ENCODE measurements at regions of chr6 and their contacts with region 1.

Region 1: DNA sequence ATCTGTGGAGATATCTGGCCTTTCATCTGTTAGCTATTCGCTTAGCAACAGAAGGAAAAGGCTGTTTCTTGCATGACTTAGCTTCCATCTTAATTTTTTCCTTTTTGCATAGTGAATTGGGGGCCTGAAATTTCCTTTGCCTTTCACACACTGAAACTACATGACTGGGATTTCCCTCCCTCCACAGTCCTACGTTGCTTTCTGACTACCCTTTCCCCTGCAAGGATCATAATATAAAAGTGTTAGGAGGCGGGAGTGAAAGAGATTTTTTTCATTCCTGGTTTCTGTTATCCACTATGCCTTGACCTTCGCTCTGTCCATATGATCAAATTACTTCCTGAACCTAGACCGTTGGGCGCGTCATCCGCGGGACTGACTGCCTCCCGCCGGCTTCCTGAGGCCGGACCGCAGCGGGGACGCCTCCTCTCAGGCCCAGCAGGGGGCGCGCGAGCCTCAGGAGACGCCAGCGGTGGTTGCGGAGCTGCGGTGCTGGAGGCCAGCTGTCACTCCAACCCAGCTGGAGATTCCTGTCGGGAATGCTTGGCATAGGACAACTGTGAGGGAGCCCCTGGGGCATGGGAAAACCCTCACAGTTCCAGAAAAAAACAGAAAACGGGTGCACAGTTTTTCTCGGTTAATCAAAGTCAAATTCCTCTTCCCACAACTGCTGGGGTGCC is 55.6 kb downstream of the MEP1A start:
- DNase-seq: peak; percentile 46
- ATAC-seq: peak; percentile 57
- H3K4me3 Mint-ChIP-seq: peak overlapping the region; percentile 52
- H3K27ac Mint-ChIP-seq: no peak overlapping the region
- H3K4me1 Mint-ChIP-seq: peaks cover 5% of the 10 kb centered on the region
- H3K27me3 Mint-ChIP-seq: peaks cover 25% of the 10 kb centered on the region
- CTCF ChIP-seq: peak; percentile 35

Region 2: DNA sequence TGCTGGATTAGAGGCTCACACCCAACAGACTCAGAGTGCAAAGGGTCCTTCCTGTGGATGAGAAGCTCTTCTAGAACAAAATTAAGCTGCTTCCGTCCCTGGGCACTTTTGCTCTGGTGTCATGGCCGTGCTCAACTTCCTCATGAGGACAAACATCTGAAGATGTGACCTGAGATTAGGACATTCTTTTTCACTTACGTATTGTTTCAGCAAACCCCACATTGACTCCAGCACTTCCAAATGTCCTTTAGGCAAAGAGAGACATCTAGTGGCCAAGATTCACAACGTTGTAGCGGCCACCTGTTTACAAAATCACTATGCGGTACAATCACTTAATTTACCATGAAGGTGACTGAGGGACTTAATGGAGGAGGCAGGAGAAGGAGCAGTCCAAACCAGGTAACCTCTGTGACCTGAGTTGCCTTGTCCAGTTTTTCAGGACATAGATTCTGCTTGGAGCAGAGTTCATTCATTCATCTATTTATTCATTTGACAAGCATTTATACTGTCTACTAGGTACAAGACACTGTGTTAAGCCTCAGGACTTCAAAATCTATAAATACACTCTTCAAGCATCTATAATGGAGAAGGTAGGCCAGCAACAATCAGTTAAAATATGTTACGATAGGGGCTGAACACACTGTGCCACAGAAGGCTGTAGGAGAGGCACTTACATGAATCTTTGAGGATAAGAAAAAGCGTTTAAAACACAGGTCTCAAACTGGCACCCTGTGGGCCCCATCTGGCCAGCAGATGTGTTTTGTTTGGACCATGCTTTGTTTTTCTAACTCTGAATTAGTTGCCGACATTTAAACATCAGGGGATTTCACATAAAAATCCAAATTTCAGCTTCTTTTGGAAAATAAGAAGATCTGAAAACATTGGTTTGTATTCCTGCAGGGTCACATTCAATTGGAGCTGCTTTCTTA is 198.9 kb after region 1 on chr6:
- CTCF ChIA-PET with region 1: no interaction called
- POLR2A ChIA-PET with region 1: no interaction called
- intact Hi-C with region 1: loop called (anchors 1 kb)
- DNase-seq: no peak
- ATAC-seq: no peak
- H3K4me3 Mint-ChIP-seq: no peak overlapping the region
- H3K27ac Mint-ChIP-seq: no peak overlapping the region
- H3K4me1 Mint-ChIP-seq: no peaks in the 10 kb centered on the region
- H3K27me3 Mint-ChIP-seq: peaks cover 7% of the 10 kb centered on the region
- CTCF ChIP-seq: no peak

Region 3: GRCh38 chr6:47061309-47062300 is 212.8 kb after region 1 on chr6:
- CTCF ChIA-PET with region 1: no interaction called
- POLR2A ChIA-PET with region 1: no interaction called
- intact Hi-C with region 1: loop called (anchors 5 kb)
- DNase-seq: no peak
- ATAC-seq: no peak
- H3K4me3 Mint-ChIP-seq: no peak overlapping the region
- H3K27ac Mint-ChIP-seq: no peak overlapping the region
- H3K4me1 Mint-ChIP-seq: no peaks in the 10 kb centered on the region
- H3K27me3 Mint-ChIP-seq: peaks cover 5% of the 10 kb centered on the region
- CTCF ChIP-seq: no peak

Measured in activated B cell treated with CpG ODN at 0.5 μM for 24 hours (primary cell).